ENCODE measurements at regions of chr13 and their contacts with region 1.

Region 1: GRCh38 chr13:99033814-99034213 is 56.0 kb upstream of the DOCK9 start:
- DNase-seq: peak in 1 of 2 experiments; percentile 23
- ATAC-seq: peak; percentile 78 to 80; a peak in 5 of 6 replicates
- H3K4me3 ChIP-seq: no peak overlapping the region
- H3K27ac ChIP-seq: peak overlapping the region in 1 of 2 experiments; percentile 57; a peak in 2 of 6 replicates
- H3K4me1 ChIP-seq: peaks cover 16% of the 10 kb centered on the region
- CTCF ChIP-seq: peak; percentile 53
- EP300 ChIP-seq: no peak
- POLR2A ChIP-seq: no peak
- RAD21 ChIP-seq: peak; percentile 64 to 67

Region 2: GRCh38 chr13:98853771-98854221 is 180.0 kb before region 1 on chr13:
- CTCF ChIA-PET with region 1: no interaction called
- POLR2A ChIA-PET with region 1: no interaction called
- DNase-seq: no peak
- ATAC-seq: no peak
- H3K4me3 ChIP-seq: no peak overlapping the region
- H3K27ac ChIP-seq: no peak overlapping the region
- H3K4me1 ChIP-seq: no peaks in the 10 kb centered on the region
- CTCF ChIP-seq: no peak
- EP300 ChIP-seq: no peak
- POLR2A ChIP-seq: no peak
- RAD21 ChIP-seq: no peak

Region 3: DNA sequence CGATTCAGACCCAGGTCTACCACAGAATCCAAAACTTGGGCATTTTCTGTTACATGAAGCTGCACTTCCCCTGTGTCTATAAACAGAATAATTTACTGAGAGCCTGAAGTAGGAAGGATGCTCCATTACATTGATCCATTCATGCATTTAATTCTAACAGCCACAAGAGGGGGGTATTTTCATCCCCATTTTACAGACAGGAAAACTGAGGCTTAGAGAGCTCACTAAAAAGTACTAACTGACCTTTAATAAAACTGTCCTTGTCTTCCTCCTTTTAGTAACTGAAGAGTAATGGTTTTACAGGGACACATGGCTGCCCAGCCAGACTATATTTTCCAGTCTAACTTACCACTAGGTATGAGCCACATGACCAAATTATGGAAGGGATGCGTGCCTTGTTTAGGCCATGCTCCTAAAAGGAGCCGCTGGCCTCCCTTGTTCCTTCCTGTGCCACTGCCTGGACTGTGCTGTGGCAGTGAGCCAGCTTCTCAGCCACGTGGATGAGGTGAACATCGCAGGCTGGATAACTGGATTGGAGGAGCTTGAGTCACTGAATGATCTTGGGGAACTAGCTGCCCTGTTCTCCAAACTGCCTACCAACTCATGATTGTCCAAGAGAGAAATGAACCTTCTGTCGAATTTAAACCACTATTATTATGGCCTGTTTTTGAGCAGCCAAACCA is 164.3 kb before region 1 on chr13:
- CTCF ChIA-PET with region 1: interaction called, 10 read pairs
- POLR2A ChIA-PET with region 1: no interaction called
- DNase-seq: peak in 1 of 2 experiments; percentile 6
- ATAC-seq: no peak
- H3K4me3 ChIP-seq: no peak overlapping the region
- H3K27ac ChIP-seq: no peak overlapping the region
- H3K4me1 ChIP-seq: no peaks in the 10 kb centered on the region
- CTCF ChIP-seq: peak; percentile 27; the same call in 1 of the 3 replicates
- EP300 ChIP-seq: no peak
- POLR2A ChIP-seq: no peak
- RAD21 ChIP-seq: no peak; a peak in 1 of 5 replicates